RWPE1 (cell line): ENCODE measurements at regions of chr12 and their contacts with region 1.

Region 1: DNA sequence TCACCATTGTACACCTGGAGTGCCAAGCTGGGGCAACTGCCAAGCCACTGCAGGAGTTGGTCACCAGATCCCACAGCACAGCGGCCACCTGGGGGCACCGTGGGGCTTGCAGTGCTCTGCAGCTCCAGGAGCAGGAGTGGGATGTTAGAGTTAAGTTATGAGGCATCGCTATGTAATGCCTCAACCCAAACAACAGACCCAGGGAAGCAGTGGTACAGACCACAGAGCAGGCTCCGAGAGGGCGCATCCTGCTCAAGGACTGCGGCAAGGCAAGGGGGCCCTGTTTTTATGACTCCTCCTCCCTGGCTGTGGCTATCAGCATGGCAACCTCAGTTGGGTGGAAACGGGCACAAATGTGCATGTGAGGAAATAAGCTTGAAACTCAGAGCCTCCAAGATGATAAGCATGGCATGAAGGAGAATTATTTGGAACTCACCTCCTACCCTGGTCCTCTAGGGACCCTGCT is 63.1 kb downstream of the ARL6IP4 start:
- DNase-seq: peak; percentile 62
- H3K27ac ChIP-seq: no peak overlapping the region
- CTCF ChIP-seq: peak; percentile 37

Region 2: GRCh38 chr12:121992059-121992879 is 1051.3 kb before region 1 on chr12:
- CTCF ChIA-PET with region 1: no interaction called
- POLR2A ChIA-PET with region 1: no interaction called
- DNase-seq: peak; percentile 96
- H3K27ac ChIP-seq: peak overlapping the region; percentile 97
- CTCF ChIP-seq: no peak

Region 3: GRCh38 chr12:122902854-122903692 is 140.5 kb before region 1 on chr12:
- CTCF ChIA-PET with region 1: no interaction called
- POLR2A ChIA-PET with region 1: no interaction called
- DNase-seq: no peak
- H3K27ac ChIP-seq: no peak overlapping the region
- CTCF ChIP-seq: no peak

Region 4: GRCh38 chr12:123150744-123151456 is 107.3 kb after region 1 on chr12 and contains the start of gene PITPNM2:
- CTCF ChIA-PET with region 1: interaction called, 20 read pairs
- POLR2A ChIA-PET with region 1: interaction called, 5 read pairs
- DNase-seq: peak; percentile 58
- H3K27ac ChIP-seq: peak within 1 kb of the TSS; percentile 63
- CTCF ChIP-seq: peak; percentile 63